Activated CD4-positive, alpha-beta T cell treated with anti-CD3 and anti-CD28 coated beads for 36 hours (primary cell): ENCODE measurements at regions of chr5 and their contacts with region 1.

Region 1: DNA sequence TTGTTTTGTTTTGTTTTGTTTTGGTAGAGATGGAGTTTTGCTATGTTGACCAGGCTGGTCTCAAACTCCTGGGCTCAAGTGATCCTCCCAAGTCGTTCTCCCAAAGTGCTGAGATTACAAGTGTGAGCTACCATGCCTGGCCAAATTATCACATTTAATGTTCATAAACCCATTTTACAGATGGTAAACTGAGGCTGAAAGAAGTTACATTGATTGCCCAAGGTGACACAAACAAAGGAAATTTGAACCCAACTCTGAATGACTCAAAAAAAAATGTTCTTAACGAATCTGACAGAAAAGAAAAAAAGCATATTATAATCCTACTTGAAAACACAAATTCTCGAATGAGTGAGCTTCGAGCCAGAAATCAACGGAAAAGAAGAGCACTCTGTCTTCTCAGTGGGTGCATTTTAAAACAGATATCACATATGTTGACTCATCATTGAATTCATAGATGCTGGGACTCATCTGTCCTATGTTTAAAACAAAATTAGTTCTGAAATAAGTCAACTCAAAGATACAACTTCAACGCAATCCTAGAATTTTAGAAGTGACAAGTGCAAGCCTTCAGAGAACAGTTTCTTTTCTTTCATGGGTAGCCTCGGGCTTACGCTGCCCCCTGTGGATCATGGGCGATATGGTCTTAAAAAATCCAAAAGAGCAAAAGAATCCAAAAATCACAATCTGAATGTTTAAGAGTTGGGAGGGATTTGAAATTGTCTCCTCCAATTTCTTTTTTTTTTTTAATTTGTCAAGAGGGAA is 28.4 kb downstream of the TIMD4 start:
- DNase-seq: peak; percentile 80
- ATAC-seq: peak; percentile 89
- H3K4me3 Mint-ChIP-seq: no peak overlapping the region
- H3K27ac Mint-ChIP-seq: peak overlapping the region; percentile 82
- H3K4me1 Mint-ChIP-seq: peaks cover 42% of the 10 kb centered on the region
- H3K27me3 Mint-ChIP-seq: peaks cover 5% of the 10 kb centered on the region

Region 2: DNA sequence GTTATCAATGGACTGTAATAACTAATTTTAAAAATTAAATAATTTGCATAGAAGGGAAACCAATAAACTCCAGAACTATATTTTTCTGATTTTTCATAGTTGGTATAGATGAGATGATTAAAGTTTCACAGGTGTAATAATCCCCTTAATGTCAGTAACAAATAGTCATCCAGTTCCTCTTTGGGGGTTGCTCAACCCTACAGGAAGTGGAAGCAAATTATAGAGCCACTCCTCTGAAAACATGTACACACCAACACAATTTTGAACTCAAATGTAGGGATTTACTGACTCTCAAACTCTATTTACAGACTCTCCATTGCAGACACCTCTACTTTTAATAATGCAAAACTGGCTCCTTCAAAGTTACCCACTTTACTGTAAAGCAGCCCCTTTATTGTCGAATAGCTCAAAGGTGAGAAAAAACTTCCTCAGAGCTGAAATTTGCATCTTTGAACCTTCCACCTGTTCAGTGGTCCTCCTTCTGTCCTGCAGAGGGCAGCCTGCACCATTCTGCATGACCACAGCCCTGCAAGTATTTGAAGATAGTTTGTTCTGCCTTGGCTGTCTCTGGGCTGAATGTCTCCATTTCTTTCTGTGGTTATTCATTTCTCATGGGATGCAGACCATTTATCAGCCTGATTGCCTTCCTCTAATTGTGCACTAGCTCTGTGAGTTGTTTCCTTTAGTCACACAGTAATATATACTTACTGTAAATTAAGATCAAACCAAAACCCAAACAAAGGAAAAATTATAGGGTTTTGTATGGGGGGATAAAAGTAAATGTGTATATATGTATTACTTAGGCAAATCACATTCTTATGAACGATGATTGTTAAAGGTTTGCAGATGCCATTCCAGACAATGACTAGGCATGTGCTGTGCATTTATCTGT is 990.9 kb before region 1 on chr5:
- CTCF ChIA-PET with region 1: interaction called, 5 read pairs
- POLR2A ChIA-PET with region 1: no interaction called
- intact Hi-C with region 1: loop called (anchors 5 to 10 kb)
- DNase-seq: peak; percentile 58
- ATAC-seq: peak; percentile 58
- H3K4me3 Mint-ChIP-seq: no peak overlapping the region
- H3K27ac Mint-ChIP-seq: no peak overlapping the region
- H3K4me1 Mint-ChIP-seq: no peaks in the 10 kb centered on the region
- H3K27me3 Mint-ChIP-seq: peaks cover 10% of the 10 kb centered on the region

Region 3: DNA sequence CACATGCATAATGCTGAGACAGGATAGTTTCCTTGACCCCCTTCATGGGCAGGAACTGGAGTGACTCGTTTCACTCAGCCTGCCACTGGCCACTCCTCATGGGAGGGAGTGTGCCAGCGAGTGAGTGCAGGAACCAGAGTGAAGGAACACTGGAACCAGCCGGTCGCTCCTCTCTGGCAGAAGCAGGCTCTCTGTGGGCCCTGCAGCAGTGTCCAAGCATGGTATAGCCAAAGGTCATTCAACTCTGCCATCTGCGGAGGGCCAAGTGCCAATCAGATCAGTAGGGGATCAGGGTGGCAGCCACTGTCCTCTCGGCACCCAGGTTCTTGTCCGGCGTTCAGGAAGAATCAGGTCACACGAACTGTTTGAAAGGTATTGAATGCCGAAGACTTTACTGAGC is 253.8 kb before region 1 on chr5:
- CTCF ChIA-PET with region 1: no interaction called
- POLR2A ChIA-PET with region 1: no interaction called
- intact Hi-C with region 1: loop called in 1 of 2 experiments (anchors 5 kb)
- DNase-seq: no peak
- ATAC-seq: no peak
- H3K4me3 Mint-ChIP-seq: no peak overlapping the region
- H3K27ac Mint-ChIP-seq: no peak overlapping the region
- H3K4me1 Mint-ChIP-seq: no peaks in the 10 kb centered on the region
- H3K27me3 Mint-ChIP-seq: peaks cover 19% of the 10 kb centered on the region

Region 4: GRCh38 chr5:156824800-156825199 is 109.8 kb before region 1 on chr5:
- CTCF ChIA-PET with region 1: interaction called, 3 read pairs
- POLR2A ChIA-PET with region 1: no interaction called
- intact Hi-C with region 1: loop called in 1 of 2 experiments (anchors 5 kb)
- DNase-seq: no peak
- ATAC-seq: no peak
- H3K4me3 Mint-ChIP-seq: no peak overlapping the region
- H3K27ac Mint-ChIP-seq: no peak overlapping the region
- H3K4me1 Mint-ChIP-seq: no peaks in the 10 kb centered on the region
- H3K27me3 Mint-ChIP-seq: peaks cover 5% of the 10 kb centered on the region

Region 5: DNA sequence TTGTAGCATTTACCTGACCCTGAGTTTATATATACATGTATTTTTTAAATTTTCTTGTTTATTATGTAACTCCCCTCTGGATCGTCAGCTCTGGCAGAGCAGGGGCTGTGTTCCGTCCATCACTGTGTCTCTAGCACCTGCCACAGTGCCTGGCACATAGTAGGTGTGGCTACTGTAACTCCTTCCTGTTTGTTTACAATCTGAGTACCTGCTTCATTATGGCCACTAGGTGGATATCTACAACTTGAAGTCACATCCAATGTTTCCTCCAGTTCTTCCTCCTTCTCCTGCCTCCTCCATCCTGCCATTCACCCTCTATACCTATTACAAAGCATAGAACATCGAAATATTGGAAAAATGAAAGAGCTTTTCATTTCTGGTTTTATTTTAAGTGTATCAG is 98.7 kb before region 1 on chr5:
- CTCF ChIA-PET with region 1: no interaction called
- POLR2A ChIA-PET with region 1: no interaction called
- intact Hi-C with region 1: loop called (anchors 2 to 5 kb)
- DNase-seq: peak; percentile 6
- ATAC-seq: peak; percentile 51
- H3K4me3 Mint-ChIP-seq: no peak overlapping the region
- H3K27ac Mint-ChIP-seq: no peak overlapping the region
- H3K4me1 Mint-ChIP-seq: peaks cover 3% of the 10 kb centered on the region
- H3K27me3 Mint-ChIP-seq: peaks cover 3% of the 10 kb centered on the region